GM12878 (cell line): ENCODE measurements at regions of chr9 and their contacts with region 1.

Region 1: GRCh38 chr9:111983484-111983908 is 86.9 kb downstream of the UGCG start:
- DNase-seq: peak; percentile 94
- ATAC-seq: peak; percentile 66
- H3K4me3 ChIP-seq: peak overlapping the region; percentile 7; the same call in 1 of the 2 replicates
- H3K27ac ChIP-seq: peak overlapping the region; percentile 99
- H3K4me1 ChIP-seq: peaks cover 62% of the 10 kb centered on the region
- H3K27me3 ChIP-seq: no peaks in the 10 kb centered on the region
- CTCF ChIP-seq: no peak
- EP300 ChIP-seq: peak; percentile 64 to 78; a peak in 2 of 4 replicates
- POLR2A ChIP-seq: peak; percentile 68
- RAD21 ChIP-seq: no peak

Region 2: DNA sequence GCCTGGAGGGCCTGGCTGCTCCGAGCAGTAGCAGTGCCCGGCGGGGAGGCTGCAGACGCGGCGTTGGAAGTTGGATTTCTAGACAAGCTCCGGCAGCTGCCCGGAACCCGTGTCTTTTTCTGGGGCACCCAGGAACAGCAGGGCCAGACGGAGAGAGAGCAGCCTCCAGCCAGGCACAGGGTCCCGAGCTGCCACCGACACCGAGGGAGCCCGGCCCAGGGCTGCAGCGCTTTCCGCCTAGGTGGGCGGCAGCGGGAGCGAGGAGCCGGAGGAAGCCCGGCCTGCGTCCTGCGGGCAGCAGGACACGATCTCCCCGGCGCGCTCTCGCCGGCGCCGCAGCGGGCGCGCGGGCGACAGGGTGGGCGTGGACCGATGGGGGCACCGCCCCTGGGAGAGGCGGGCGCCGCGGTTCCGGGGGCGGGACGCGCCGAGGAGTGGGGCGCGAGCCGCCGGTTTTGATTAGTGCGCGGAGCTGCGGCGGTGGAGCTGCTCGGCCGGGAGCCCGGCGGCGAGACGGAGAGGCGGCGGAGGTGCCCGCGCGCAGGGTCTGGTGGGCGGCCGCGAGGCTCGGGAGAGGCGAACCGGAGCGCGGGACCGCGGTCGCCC is 87.0 kb before region 1 on chr9 and contains the start of gene UGCG:
- CTCF ChIA-PET with region 1: interaction called, 13 read pairs
- POLR2A ChIA-PET with region 1: interaction called, 7 read pairs
- RAD21 ChIA-PET with region 1: interaction called, 14 read pairs
- SMC1A ChIA-PET with region 1: interaction called, 13 read pairs
- in situ Hi-C with region 1: no loop called
- intact Hi-C with region 1: loop called (anchors 2 kb)
- DNase-seq: no peak
- ATAC-seq: peak; percentile 79
- H3K4me3 ChIP-seq: peak within 1 kb of the TSS; percentile 80
- H3K27ac ChIP-seq: peak within 1 kb of the TSS; percentile 93
- H3K4me1 ChIP-seq: no peaks in the 10 kb centered on the region; the same call in 1 of the 2 replicates
- H3K27me3 ChIP-seq: no peaks in the 10 kb centered on the region
- CTCF ChIP-seq: no peak
- EP300 ChIP-seq: 0 out of 4 replicates have a peak, but pooled peaks of 1 of the 2 experiments have one; percentile 14
- POLR2A ChIP-seq: peak; percentile 93
- RAD21 ChIP-seq: 0 out of 2 replicates have a peak, but pooled peaks have one; percentile 2
- polyA plus RNA-seq, gene UGCG: 48.0 to 62.1 TPM

Region 3: GRCh38 chr9:111926421-111926875 is 57.0 kb before region 1 on chr9:
- CTCF ChIA-PET with region 1: interaction called, 4 read pairs
- POLR2A ChIA-PET with region 1: interaction called, 6 read pairs
- RAD21 ChIA-PET with region 1: interaction called, 6 read pairs
- SMC1A ChIA-PET with region 1: interaction called, 12 read pairs
- in situ Hi-C with region 1: no loop called
- intact Hi-C with region 1: no loop called
- DNase-seq: peak; percentile 86
- ATAC-seq: peak; percentile 98
- H3K4me3 ChIP-seq: no peak overlapping the region
- H3K27ac ChIP-seq: peak overlapping the region; percentile 75
- H3K4me1 ChIP-seq: peaks cover 13% of the 10 kb centered on the region; the same call in 1 of the 2 replicates
- H3K27me3 ChIP-seq: no peaks in the 10 kb centered on the region
- CTCF ChIP-seq: no peak
- EP300 ChIP-seq: peak; percentile 73 to 76; a peak in 3 of 4 replicates
- POLR2A ChIP-seq: no peak
- RAD21 ChIP-seq: no peak

Region 4: GRCh38 chr9:111965566-111966019 is 17.9 kb before region 1 on chr9:
- CTCF ChIA-PET with region 1: interaction called, 7 read pairs
- POLR2A ChIA-PET with region 1: interaction called, 12 read pairs
- RAD21 ChIA-PET with region 1: interaction called, 107 read pairs
- SMC1A ChIA-PET with region 1: interaction called, 136 read pairs
- in situ Hi-C with region 1: no loop called
- intact Hi-C with region 1: loop called (anchors 2 kb)
- DNase-seq: peak; percentile 90
- ATAC-seq: peak; percentile 80
- H3K4me3 ChIP-seq: no peak overlapping the region
- H3K27ac ChIP-seq: peak overlapping the region; percentile 56
- H3K4me1 ChIP-seq: peaks cover 25% of the 10 kb centered on the region
- H3K27me3 ChIP-seq: no peaks in the 10 kb centered on the region
- CTCF ChIP-seq: no peak
- EP300 ChIP-seq: peak; percentile 82 to 89
- POLR2A ChIP-seq: no peak
- RAD21 ChIP-seq: 0 out of 2 replicates have a peak, but pooled peaks have one; percentile 3

Region 5: DNA sequence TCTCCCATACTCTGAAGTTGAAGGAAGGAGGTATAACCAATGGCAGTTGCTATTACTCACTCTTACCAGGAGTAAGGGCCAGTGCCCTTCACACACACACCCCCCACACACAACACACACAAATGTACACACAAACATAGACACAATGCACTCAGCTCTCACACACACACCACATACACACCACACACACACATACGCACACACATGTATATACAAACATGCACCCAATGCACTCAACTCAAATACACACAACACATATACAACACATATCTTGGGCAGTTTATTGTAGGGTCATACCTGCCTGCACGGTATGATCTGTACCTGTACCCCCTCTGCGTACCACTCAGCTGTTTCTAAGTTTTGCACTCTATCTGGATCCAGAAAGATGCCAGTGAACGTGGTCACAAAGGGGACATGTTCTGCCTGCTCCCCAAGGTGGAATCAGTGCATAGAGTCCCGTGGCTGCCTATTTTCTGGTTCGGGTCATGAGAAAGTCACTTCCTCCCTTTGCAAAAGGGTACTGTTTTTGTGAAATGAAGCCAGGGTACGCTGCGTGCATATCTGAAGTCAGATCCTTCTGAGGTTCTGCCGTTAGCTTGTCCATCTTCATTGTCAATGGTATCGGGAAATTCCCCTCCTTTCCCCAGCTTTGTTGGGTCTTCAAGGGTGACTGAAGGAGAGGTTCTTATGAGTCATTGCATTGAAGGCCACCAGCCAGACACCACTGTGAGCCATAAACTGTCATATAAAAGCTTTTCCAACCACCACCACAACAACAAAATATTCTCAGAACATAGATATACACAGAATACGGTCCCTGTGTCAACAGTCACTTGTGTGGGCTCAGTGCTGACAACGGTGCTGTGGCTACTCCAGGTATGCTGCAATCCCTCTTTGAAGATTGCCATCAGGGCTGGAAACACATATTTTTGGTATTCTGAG is 45.1 kb after region 1 on chr9:
- CTCF ChIA-PET with region 1: interaction called, 25 read pairs
- POLR2A ChIA-PET with region 1: interaction called, 158 read pairs
- RAD21 ChIA-PET with region 1: interaction called, 174 read pairs
- SMC1A ChIA-PET with region 1: interaction called, 313 read pairs
- in situ Hi-C with region 1: no loop called
- intact Hi-C with region 1: loop called (anchors 1 kb)
- DNase-seq: peak; percentile 98
- ATAC-seq: peak; percentile 63
- H3K4me3 ChIP-seq: peak overlapping the region; percentile 63
- H3K27ac ChIP-seq: peak overlapping the region; percentile 97
- H3K4me1 ChIP-seq: peaks cover 38% of the 10 kb centered on the region
- H3K27me3 ChIP-seq: no peaks in the 10 kb centered on the region
- CTCF ChIP-seq: no peak
- EP300 ChIP-seq: peak; percentile 98 to 99
- POLR2A ChIP-seq: peak; percentile 84
- RAD21 ChIP-seq: peak; percentile 41

Region 6: DNA sequence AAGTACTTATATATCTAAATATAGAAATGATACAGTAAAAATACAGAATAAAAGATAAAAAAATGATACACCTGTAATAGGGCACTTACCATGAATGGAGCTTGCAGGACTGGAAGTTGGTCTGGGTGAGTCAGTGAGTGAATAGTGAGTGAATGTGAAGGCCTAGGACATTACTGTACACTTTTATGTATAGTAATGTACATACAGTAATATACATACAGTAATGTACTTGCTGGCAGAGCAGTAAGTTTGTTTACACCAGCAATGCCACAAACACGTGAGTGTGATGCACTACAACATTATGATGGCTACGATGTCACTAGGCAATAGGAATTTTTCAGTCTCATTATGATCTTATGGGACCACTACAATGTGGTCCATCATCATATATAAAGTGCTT is 157.4 kb after region 1 on chr9:
- CTCF ChIA-PET with region 1: no interaction called
- POLR2A ChIA-PET with region 1: no interaction called
- RAD21 ChIA-PET with region 1: no interaction called
- SMC1A ChIA-PET with region 1: no interaction called
- in situ Hi-C with region 1: no loop called
- intact Hi-C with region 1: no loop called
- DNase-seq: no peak
- ATAC-seq: peak; percentile 44
- H3K4me3 ChIP-seq: no peak overlapping the region
- H3K27ac ChIP-seq: no peak overlapping the region
- H3K4me1 ChIP-seq: peaks cover 6% of the 10 kb centered on the region
- H3K27me3 ChIP-seq: no peaks in the 10 kb centered on the region
- CTCF ChIP-seq: no peak
- EP300 ChIP-seq: no peak
- POLR2A ChIP-seq: no peak
- RAD21 ChIP-seq: no peak